ENCODE measurements at regions of chr18 and their contacts with region 1.

Region 1: DNA sequence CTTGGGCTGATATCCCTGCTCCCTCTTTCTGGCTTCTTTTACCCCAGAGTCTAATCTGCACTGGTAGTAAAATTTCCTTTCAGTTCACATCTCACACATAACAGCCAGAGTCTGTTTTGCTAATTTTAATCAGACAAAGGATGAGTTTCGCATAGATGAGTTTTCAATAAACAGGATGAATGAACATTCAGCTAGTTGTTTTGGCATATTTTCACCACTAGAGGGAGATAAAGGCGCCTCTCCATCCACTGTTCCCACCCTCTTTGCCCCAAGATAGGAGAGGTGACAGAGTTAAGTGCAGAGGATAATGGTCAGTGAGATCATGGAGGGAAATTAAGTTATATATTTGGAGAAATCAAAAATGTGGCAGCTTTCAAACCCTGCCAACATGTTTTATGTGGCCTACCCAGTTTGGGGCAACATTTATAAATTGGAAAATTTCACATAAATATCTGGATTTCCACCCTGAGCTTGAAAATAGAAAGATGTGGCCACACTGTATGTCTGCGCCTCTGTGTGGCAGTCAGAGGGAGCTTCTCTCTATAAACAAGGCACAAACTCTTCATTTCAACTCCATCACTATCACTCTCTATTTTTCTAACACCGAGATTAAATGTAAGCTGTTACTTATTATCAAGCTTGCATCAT is 48.5 kb upstream of the DTNA start:
- DNase-seq: peak; percentile 67
- H3K4me3 Mint-ChIP-seq: no peak overlapping the region
- H3K27ac Mint-ChIP-seq: no peak overlapping the region
- H3K4me1 Mint-ChIP-seq: peaks cover 16% of the 10 kb centered on the region
- H3K27me3 Mint-ChIP-seq: no peaks in the 10 kb centered on the region
- CTCF ChIP-seq: peak; percentile 59

Region 2: DNA sequence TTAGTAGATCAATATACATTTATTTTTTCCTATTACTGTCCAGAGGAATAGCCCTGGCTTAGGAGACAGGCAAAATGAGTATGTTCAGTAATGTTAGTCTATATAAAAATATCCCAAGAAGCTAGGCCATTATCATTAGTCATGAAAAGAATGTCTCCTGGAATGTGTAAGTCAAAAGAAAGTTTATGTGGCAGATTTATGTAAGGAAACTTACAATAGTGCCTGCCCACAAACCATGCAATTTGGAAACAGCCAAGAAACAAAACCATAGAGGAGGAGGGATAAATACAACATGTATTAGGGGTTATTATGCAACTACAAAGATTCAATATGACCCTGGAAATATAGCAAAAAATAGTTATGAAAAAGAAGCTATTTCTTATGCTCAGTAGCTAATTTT is 533.2 kb before region 1 on chr18:
- CTCF ChIA-PET with region 1: interaction called, 39 read pairs
- POLR2A ChIA-PET with region 1: no interaction called
- intact Hi-C with region 1: loop called (anchors 5 kb)
- DNase-seq: no peak
- H3K4me3 Mint-ChIP-seq: no peak overlapping the region
- H3K27ac Mint-ChIP-seq: no peak overlapping the region
- H3K4me1 Mint-ChIP-seq: no peaks in the 10 kb centered on the region
- H3K27me3 Mint-ChIP-seq: no peaks in the 10 kb centered on the region
- CTCF ChIP-seq: no peak

Region 3: DNA sequence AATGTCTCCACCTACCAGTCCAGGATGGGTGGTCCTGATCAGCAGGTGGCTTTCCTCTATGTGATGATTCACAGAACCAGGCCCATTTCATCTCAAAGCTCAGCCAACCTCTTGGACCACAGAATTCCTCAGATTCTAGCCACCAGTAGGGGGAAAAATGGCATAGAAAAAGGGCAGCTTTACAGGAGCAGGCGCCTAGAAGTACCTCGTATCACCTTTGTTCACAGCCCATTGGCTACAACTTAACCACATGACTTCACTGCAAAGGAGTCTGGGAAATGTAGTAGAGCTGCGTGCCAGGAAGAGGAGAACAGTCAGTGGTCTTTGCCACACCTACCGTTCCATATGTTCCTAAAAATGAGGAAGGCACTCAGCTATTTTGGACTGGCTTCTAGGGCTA is 14.3 kb before region 1 on chr18:
- CTCF ChIA-PET with region 1: interaction called, 54 read pairs
- POLR2A ChIA-PET with region 1: interaction called, 4 read pairs
- intact Hi-C with region 1: no loop called
- DNase-seq: no peak
- H3K4me3 Mint-ChIP-seq: no peak overlapping the region
- H3K27ac Mint-ChIP-seq: no peak overlapping the region
- H3K4me1 Mint-ChIP-seq: peaks cover 17% of the 10 kb centered on the region
- H3K27me3 Mint-ChIP-seq: no peaks in the 10 kb centered on the region
- CTCF ChIP-seq: no peak

Region 4: GRCh38 chr18:34701911-34702310 is 40.3 kb after region 1 on chr18:
- CTCF ChIA-PET with region 1: interaction called, 62 read pairs
- POLR2A ChIA-PET with region 1: interaction called, 32 read pairs
- intact Hi-C with region 1: loop called (anchors 5 kb)
- DNase-seq: no peak
- H3K4me3 Mint-ChIP-seq: no peak overlapping the region
- H3K27ac Mint-ChIP-seq: no peak overlapping the region
- H3K4me1 Mint-ChIP-seq: peaks cover 10% of the 10 kb centered on the region
- H3K27me3 Mint-ChIP-seq: no peaks in the 10 kb centered on the region
- CTCF ChIP-seq: no peak

Region 5: GRCh38 chr18:34723143-34723542 is 61.6 kb after region 1 on chr18:
- CTCF ChIA-PET with region 1: interaction called, 44 read pairs
- POLR2A ChIA-PET with region 1: no interaction called
- intact Hi-C with region 1: loop called (anchors 2 kb)
- DNase-seq: no peak
- H3K4me3 Mint-ChIP-seq: no peak overlapping the region
- H3K27ac Mint-ChIP-seq: no peak overlapping the region
- H3K4me1 Mint-ChIP-seq: no peaks in the 10 kb centered on the region
- H3K27me3 Mint-ChIP-seq: no peaks in the 10 kb centered on the region
- CTCF ChIP-seq: no peak

Region 6: DNA sequence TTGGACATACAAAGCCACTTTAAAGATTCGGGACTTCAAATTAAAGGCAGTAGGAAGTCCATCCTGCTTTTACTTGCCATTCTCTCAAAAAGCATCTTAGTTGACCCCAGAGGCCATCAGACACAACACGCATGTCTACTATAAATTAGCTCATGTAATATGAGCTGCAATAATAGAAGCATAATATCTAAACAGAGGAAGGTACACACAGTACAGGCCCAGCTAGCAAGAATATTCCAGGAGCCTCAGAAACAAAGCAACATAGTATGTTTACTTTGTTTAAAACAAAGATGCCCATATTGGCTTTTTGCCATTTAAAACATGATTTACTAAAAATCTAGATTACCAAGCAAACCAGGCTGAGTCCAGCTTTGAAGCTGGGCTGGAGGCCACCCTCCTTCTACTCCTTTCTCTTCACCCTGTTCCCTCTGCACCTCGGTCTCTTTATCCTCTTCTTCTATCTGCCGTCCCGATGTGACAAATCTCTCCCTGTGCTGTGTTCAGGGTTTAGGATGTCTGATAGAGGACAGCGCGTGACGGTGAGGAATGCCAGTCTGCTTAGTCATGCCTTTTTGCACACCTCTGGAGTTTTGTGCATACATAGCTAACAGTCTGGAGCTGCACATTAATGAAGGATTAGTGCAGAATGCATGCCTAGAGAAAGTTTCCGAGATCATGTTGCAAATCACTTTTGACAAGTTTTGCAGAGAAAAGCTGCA is 76.7 kb after region 1 on chr18:
- CTCF ChIA-PET with region 1: interaction called, 44 read pairs
- POLR2A ChIA-PET with region 1: interaction called, 3 read pairs
- intact Hi-C with region 1: no loop called
- DNase-seq: peak; percentile 43
- H3K4me3 Mint-ChIP-seq: peak overlapping the region; percentile 8
- H3K27ac Mint-ChIP-seq: peak overlapping the region; percentile 2
- H3K4me1 Mint-ChIP-seq: peaks cover 6% of the 10 kb centered on the region
- H3K27me3 Mint-ChIP-seq: no peaks in the 10 kb centered on the region
- CTCF ChIP-seq: no peak

Region 7: DNA sequence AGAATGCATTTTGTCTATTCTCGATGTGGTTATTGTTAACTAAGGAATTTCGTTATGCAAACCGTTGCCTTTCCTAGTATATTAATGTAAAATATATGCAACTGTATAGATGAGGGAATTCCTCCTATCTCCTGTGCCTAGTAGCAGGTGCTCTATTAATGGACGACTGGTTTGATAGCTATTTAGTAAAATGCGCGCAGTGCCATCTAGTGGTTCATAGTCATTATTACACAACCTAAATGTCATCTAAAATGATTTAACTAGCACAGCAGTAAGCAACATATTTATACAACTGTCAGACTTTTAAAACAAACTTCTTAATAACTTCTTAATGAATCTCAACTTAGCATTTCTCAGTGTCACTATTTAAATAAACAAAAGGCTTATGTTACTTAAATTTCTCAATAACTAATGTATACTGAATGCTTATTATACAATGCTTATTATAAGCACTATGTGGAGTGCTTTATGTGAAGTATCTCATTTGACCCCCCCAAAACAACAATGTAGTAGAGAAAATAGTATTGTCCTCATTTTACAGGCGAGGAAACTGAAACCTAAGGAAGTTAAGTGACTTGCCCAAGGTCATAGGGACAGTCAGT is 126.4 kb after region 1 on chr18:
- CTCF ChIA-PET with region 1: interaction called, 148 read pairs
- POLR2A ChIA-PET with region 1: interaction called, 3 read pairs
- intact Hi-C with region 1: loop called (anchors 1 kb)
- DNase-seq: peak; percentile 72
- H3K4me3 Mint-ChIP-seq: no peak overlapping the region
- H3K27ac Mint-ChIP-seq: no peak overlapping the region
- H3K4me1 Mint-ChIP-seq: no peaks in the 10 kb centered on the region
- H3K27me3 Mint-ChIP-seq: peaks cover 12% of the 10 kb centered on the region
- CTCF ChIP-seq: peak; percentile 64

Measured in MCF 10A (cell line).